ENCODE measurements at regions of chr4 and their contacts with region 1.

Region 1: GRCh38 chr4:148998719-148999118 is 556.5 kb upstream of the NR3C2 start:
- DNase-seq: peak; percentile 2
- H3K4me3 ChIP-seq: no peak overlapping the region
- H3K27ac ChIP-seq: no peak overlapping the region
- H3K27me3 ChIP-seq: no peaks in the 10 kb centered on the region
- CTCF ChIP-seq: peak; percentile 65

Region 2: GRCh38 chr4:148795156-148795864 is 203.4 kb before region 1 on chr4:
- CTCF ChIA-PET with region 1: no interaction called
- POLR2A ChIA-PET with region 1: no interaction called
- DNase-seq: no peak
- H3K4me3 ChIP-seq: no peak overlapping the region
- H3K27ac ChIP-seq: no peak overlapping the region
- H3K27me3 ChIP-seq: no peaks in the 10 kb centered on the region
- CTCF ChIP-seq: no peak

Region 3: GRCh38 chr4:149264093-149264733 is 265.5 kb after region 1 on chr4:
- CTCF ChIA-PET with region 1: interaction called, 17 read pairs
- POLR2A ChIA-PET with region 1: no interaction called
- DNase-seq: peak; percentile 45
- H3K4me3 ChIP-seq: no peak overlapping the region
- H3K27ac ChIP-seq: no peak overlapping the region
- H3K27me3 ChIP-seq: no peaks in the 10 kb centered on the region
- CTCF ChIP-seq: peak; percentile 89

Region 4: DNA sequence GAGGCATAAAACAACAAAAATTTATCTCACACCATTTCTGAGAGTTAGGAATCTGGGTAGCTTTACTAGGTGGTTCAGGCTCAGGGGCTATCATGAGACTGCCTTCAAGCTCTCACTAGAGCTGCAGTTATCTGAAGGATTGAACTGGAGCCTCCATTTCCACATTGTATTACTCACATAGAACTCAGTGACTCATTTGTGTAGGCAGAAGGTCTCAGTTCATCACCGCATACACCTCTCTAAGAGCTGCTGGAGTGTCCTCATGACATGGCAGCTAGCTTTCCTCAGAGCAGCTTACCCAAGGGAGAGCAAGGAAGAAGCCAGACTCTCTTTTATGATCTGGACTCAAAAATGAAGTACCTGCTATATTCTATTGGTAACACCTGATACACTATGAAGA is 427.7 kb after region 1 on chr4:
- CTCF ChIA-PET with region 1: no interaction called
- POLR2A ChIA-PET with region 1: no interaction called
- DNase-seq: no peak
- H3K4me3 ChIP-seq: no peak overlapping the region
- H3K27ac ChIP-seq: no peak overlapping the region
- H3K27me3 ChIP-seq: no peaks in the 10 kb centered on the region
- CTCF ChIP-seq: no peak

Region 5: GRCh38 chr4:149765630-149766029 is 766.9 kb after region 1 on chr4:
- CTCF ChIA-PET with region 1: no interaction called
- POLR2A ChIA-PET with region 1: no interaction called
- DNase-seq: no peak
- H3K4me3 ChIP-seq: no peak overlapping the region
- H3K27ac ChIP-seq: no peak overlapping the region
- H3K27me3 ChIP-seq: no peaks in the 10 kb centered on the region
- CTCF ChIP-seq: no peak